B cell (primary cell): ENCODE measurements at regions of chr11 and their contacts with region 1.

Region 1: DNA sequence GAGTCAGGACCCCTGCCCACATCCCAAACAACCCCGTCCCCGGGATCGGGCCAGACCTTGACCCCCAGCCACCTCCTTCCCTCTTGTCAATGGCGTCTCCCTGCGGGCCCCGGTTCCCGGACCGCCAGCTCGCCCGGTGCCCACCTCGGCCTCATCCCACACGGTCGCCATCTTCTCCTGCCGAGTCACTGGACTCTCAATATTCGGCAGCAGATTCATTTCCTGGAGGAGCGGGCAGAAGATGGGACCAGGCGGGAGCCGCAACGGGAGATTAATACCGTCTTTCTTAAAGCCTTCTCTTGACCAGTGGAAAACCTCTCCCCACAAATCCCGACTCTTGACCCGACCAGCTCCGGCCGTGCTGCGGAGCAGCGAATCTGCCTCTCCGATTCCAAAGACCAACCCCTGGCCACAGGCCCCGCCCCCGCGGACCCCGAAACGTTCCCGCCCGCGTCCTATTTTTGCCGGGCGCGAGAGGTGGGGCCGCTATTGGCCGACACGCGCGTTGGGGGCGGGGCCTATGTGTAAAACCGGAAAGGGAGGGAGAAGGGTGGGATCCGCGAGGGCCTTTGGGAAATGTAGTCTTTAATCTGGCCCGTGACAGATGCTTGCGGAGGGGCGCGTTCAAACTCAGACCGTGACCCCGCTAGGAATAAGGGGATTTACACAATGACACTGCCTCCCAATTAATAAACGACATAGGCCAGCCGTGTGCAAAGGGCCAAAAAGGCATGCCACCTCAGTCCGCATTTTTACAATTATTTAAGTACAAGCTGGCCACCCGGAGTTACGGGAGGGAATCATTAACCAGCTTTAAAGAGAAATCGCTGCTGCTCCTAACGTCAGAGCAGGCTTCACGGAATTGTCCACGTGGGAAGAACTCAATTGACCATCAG is at the start of gene PSMC3:
- DNase-seq: peak; percentile 97
- ATAC-seq: peak; percentile 98
- H3K4me3 ChIP-seq: peak within 1 kb of the TSS; percentile 88 to 99 (median 93)
- H3K4me3 Mint-ChIP-seq: peak within 1 kb of the TSS; percentile 100
- H3K27ac ChIP-seq: peak within 1 kb of the TSS; percentile 78 to 94
- H3K27ac Mint-ChIP-seq: peak within 1 kb of the TSS; percentile 98
- H3K4me1 ChIP-seq: peaks cover 9 to 22% of the 10 kb centered on the region in 2 donors
- H3K4me1 Mint-ChIP-seq: peaks cover 25% of the 10 kb centered on the region
- H3K27me3 ChIP-seq: no peaks in the 10 kb centered on the region
- H3K27me3 Mint-ChIP-seq: no peaks in the 10 kb centered on the region
- CTCF ChIP-seq: no peak
- total RNA-seq, gene PSMC3: 59.9 and 62.7 TPM in 2 replicates

Region 2: DNA sequence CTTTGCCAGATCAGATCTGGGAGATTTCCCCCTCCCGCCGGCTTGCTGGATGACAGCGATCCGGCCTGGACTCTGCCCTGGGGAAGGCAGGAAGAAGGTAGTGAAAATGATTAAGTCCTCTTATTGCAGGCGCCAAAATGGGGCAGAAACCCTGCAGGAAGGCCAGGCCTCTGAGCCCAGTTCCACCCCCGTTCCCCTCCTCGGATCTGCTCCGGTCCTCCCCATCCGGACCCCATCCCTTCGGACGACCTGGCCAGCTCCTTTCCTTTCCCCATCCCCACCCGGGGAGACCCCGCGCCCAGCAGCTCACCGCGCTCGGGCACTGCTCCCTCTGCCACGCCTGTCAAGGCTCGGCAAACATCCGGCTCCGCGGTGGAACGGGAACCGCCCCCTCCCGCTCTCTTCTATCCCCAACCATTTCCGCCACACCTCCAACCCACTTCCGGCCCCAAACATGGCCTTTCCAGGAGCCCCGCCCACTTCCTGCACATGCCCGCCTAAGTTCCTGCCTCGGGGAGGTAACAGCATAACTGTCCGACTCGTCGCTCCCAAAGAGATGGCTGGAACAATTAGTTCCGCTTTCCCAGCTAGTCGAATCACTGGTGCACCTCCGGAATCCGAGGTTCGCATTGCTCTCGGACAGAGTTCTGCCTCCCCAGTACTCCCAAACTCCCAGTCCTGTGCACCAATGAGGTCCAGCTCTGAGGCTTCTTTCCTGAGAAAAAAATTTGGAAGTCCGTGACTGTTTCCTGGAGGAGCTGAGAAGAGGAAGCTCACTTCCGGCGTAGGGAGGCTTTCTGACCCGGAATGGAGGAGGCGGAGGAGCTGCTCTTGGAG is 725.9 kb before region 1 on chr11 and contains the starts of genes ARHGAP1 and ZNF408:
- CTCF ChIA-PET with region 1: no interaction called
- POLR2A ChIA-PET with region 1: no interaction called
- intact Hi-C with region 1: loop called (anchors 2 kb)
- DNase-seq: peak; percentile 99
- ATAC-seq: peak; percentile 90
- H3K4me3 ChIP-seq: peak within 1 kb of the TSS; percentile 87 to 100 (median 98)
- H3K4me3 Mint-ChIP-seq: peak within 1 kb of the TSS; percentile 96
- H3K27ac ChIP-seq: peak within 1 kb of the TSS; percentile 47 to 86
- H3K27ac Mint-ChIP-seq: peak within 1 kb of the TSS; percentile 93
- H3K4me1 ChIP-seq: peaks cover 30 to 39% of the 10 kb centered on the region in 2 donors
- H3K4me1 Mint-ChIP-seq: peaks cover 43% of the 10 kb centered on the region
- H3K27me3 ChIP-seq: no peaks in the 10 kb centered on the region
- H3K27me3 Mint-ChIP-seq: no peaks in the 10 kb centered on the region
- CTCF ChIP-seq: no peak
- total RNA-seq, gene ARHGAP1: 55.0 and 56.8 TPM in 2 replicates
- total RNA-seq, gene ZNF408: 19.2 and 22.3 TPM in 2 replicates

Region 3: DNA sequence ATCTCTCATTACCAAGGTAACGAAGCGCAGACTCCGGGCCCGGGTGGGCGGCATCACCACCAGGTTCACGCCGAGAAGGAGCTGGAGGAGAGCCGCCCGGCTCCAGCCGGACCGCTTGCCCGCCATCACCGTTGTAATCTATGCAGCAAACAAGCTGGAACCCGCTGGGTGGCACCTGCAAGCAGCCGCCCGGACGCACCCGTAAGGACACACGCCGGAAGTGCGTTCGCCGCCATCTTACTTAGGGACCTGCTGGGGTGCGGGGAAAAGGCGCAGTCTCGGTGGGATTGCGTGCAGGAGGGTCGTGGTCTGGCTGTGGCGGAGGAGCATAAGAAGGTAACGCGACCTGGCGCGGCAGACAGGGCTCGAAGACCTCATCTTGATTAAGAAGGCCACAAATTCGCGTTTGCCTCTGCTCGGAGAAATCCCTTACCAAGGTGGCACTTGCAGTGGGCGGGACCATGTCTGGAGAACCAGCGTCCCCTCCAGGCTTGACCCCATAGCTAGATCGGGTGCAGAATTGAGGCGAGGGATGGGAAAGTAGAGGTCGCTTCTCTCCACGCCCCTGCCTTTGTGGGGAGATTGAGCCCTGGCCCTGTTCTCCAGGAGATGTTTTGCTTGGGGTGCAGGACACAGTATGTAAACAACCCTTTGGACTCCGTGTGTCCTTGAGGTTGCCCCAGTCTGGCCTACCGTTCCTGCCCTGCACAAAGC is 177.5 kb before region 1 on chr11 and contains the start of gene ACP2:
- CTCF ChIA-PET with region 1: no interaction called
- POLR2A ChIA-PET with region 1: interaction called, 10 read pairs
- intact Hi-C with region 1: loop called (anchors 1 kb)
- DNase-seq: peak; percentile 94
- ATAC-seq: peak; percentile 94
- H3K4me3 ChIP-seq: peak within 1 kb of the TSS; percentile 65 to 99 (median 90)
- H3K4me3 Mint-ChIP-seq: peak within 1 kb of the TSS; percentile 99
- H3K27ac ChIP-seq: peak within 1 kb of the TSS; percentile 56 to 79
- H3K27ac Mint-ChIP-seq: peak within 1 kb of the TSS; percentile 99
- H3K4me1 ChIP-seq: peaks cover 13 to 22% of the 10 kb centered on the region in 2 donors
- H3K4me1 Mint-ChIP-seq: peaks cover 24% of the 10 kb centered on the region
- H3K27me3 ChIP-seq: no peaks in the 10 kb centered on the region
- H3K27me3 Mint-ChIP-seq: no peaks in the 10 kb centered on the region
- CTCF ChIP-seq: no peak
- total RNA-seq, gene ACP2: 23.5 and 29.5 TPM in 2 replicates

Region 4: GRCh38 chr11:47305734-47306483 is 120.4 kb before region 1 on chr11:
- CTCF ChIA-PET with region 1: no interaction called
- POLR2A ChIA-PET with region 1: no interaction called
- intact Hi-C with region 1: no loop called
- DNase-seq: no peak
- ATAC-seq: no peak
- H3K4me3 ChIP-seq: no peak overlapping the region
- H3K4me3 Mint-ChIP-seq: no peak overlapping the region
- H3K27ac ChIP-seq: no peak overlapping the region
- H3K27ac Mint-ChIP-seq: no peak overlapping the region
- H3K4me1 ChIP-seq: no peaks in the 10 kb centered on the region
- H3K4me1 Mint-ChIP-seq: no peaks in the 10 kb centered on the region
- H3K27me3 ChIP-seq: no peaks in the 10 kb centered on the region
- H3K27me3 Mint-ChIP-seq: no peaks in the 10 kb centered on the region
- CTCF ChIP-seq: no peak

Region 5: GRCh38 chr11:47329987-47330931 is 96.0 kb before region 1 on chr11:
- CTCF ChIA-PET with region 1: no interaction called
- POLR2A ChIA-PET with region 1: interaction called, 4 read pairs
- intact Hi-C with region 1: loop called (anchors 1 kb)
- DNase-seq: no peak
- ATAC-seq: no peak
- H3K4me3 ChIP-seq: no peak overlapping the region
- H3K4me3 Mint-ChIP-seq: no peak overlapping the region
- H3K27ac ChIP-seq: no peak overlapping the region
- H3K27ac Mint-ChIP-seq: peak overlapping the region; percentile 20
- H3K4me1 ChIP-seq: peaks cover 0 to 16% of the 10 kb centered on the region in 2 donors
- H3K4me1 Mint-ChIP-seq: peaks cover 14% of the 10 kb centered on the region
- H3K27me3 ChIP-seq: no peaks in the 10 kb centered on the region
- H3K27me3 Mint-ChIP-seq: no peaks in the 10 kb centered on the region
- CTCF ChIP-seq: no peak

Region 6: DNA sequence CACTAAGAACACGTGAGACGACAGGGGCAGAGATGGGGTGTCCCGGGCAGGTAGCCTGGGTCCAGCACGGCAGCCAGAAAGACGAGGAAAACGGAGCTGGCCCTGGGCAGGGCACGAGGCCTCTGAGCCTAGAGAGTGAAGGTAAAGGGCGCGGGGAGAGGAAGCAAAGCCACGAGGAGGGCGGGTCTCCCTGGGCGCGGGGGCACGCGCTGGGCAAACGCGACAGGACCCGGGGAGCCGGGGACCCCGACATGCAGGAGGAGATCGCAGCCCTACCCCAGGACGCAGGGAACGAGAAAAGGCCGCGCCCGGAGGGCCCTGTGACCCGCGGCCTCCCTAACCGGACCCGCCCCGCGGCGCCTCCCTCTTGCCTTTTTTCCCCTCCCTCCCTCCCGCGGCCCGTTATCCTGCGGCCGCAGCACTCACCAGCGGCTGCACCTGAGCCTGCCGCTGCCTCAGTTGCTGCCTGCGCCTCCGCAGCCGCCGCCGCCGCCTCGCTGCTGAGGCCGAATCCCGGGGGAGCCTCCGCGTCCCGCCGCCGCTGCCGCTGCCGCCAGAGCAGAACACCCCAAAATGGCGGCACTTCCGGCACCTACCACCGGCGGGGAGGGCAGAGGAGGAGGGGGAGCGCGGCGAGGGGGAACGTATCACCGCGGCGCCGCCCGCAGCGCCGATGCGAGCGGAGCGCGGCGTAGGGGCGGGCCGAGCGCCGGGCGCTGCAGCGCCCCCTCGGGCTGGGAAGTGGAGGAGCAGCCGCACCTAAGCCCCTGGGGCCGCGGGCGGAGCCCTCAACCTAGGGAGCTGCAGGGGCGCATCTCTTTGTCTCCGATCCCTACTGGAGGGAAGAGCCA is 126.5 kb after region 1 on chr11 and contains the start of gene CELF1:
- CTCF ChIA-PET with region 1: no interaction called
- POLR2A ChIA-PET with region 1: no interaction called
- intact Hi-C with region 1: loop called (anchors 1 kb)
- DNase-seq: peak; percentile 96
- ATAC-seq: peak; percentile 95
- H3K4me3 ChIP-seq: peak within 1 kb of the TSS; percentile 65 to 94 (median 90)
- H3K4me3 Mint-ChIP-seq: peak within 1 kb of the TSS; percentile 99
- H3K27ac ChIP-seq: peak within 1 kb of the TSS; percentile 72 to 88
- H3K27ac Mint-ChIP-seq: peak within 1 kb of the TSS; percentile 93
- H3K4me1 ChIP-seq: peaks cover 31 to 32% of the 10 kb centered on the region in 2 donors
- H3K4me1 Mint-ChIP-seq: peaks cover 44% of the 10 kb centered on the region
- H3K27me3 ChIP-seq: no peaks in the 10 kb centered on the region
- H3K27me3 Mint-ChIP-seq: no peaks in the 10 kb centered on the region
- CTCF ChIP-seq: peak; percentile 96
- total RNA-seq, gene CELF1: 153 and 167 TPM in 2 replicates

Region 7: GRCh38 chr11:47715082-47715669 is 288.9 kb after region 1 on chr11 and contains the start of gene AGBL2:
- CTCF ChIA-PET with region 1: no interaction called
- POLR2A ChIA-PET with region 1: no interaction called
- intact Hi-C with region 1: loop called (anchors 5 kb)
- DNase-seq: peak; percentile 88
- ATAC-seq: peak; percentile 99
- H3K4me3 ChIP-seq: peak within 1 kb of the TSS; percentile 81 to 95 (median 94)
- H3K4me3 Mint-ChIP-seq: peak within 1 kb of the TSS; percentile 97
- H3K27ac ChIP-seq: peak within 1 kb of the TSS; percentile 84 to 97
- H3K27ac Mint-ChIP-seq: peak within 1 kb of the TSS; percentile 97
- H3K4me1 ChIP-seq: peaks cover 11 to 15% of the 10 kb centered on the region in 2 donors
- H3K4me1 Mint-ChIP-seq: peaks cover 14% of the 10 kb centered on the region
- H3K27me3 ChIP-seq: no peaks in the 10 kb centered on the region
- H3K27me3 Mint-ChIP-seq: no peaks in the 10 kb centered on the region
- CTCF ChIP-seq: no peak
- total RNA-seq, gene AGBL2: 13.6 and 17.0 TPM in 2 replicates